Sciatic nerve (tissue), 2 donors: ENCODE measurements at regions of chr10 and their contacts with region 1.

Region 1: GRCh38 chr10:114304017-114304570 is 65.0 kb downstream of the VWA2 start:
- DNase-seq: peak; percentile 92
- ATAC-seq: peak; percentile 85

Region 2: GRCh38 chr10:113922787-113923570 is 381.1 kb before region 1 on chr10:
- intact Hi-C with region 1: no loop called
- DNase-seq: no peak
- ATAC-seq: no peak

Region 3: GRCh38 chr10:114212153-114212552 is 91.9 kb before region 1 on chr10:
- intact Hi-C with region 1: no loop called
- DNase-seq: no peak
- ATAC-seq: no peak

Region 4: GRCh38 chr10:114403541-114404161 is 99.6 kb after region 1 on chr10:
- intact Hi-C with region 1: loop called (anchors 10 kb)
- DNase-seq: peak; percentile 78
- ATAC-seq: peak; percentile 78

Region 5: DNA sequence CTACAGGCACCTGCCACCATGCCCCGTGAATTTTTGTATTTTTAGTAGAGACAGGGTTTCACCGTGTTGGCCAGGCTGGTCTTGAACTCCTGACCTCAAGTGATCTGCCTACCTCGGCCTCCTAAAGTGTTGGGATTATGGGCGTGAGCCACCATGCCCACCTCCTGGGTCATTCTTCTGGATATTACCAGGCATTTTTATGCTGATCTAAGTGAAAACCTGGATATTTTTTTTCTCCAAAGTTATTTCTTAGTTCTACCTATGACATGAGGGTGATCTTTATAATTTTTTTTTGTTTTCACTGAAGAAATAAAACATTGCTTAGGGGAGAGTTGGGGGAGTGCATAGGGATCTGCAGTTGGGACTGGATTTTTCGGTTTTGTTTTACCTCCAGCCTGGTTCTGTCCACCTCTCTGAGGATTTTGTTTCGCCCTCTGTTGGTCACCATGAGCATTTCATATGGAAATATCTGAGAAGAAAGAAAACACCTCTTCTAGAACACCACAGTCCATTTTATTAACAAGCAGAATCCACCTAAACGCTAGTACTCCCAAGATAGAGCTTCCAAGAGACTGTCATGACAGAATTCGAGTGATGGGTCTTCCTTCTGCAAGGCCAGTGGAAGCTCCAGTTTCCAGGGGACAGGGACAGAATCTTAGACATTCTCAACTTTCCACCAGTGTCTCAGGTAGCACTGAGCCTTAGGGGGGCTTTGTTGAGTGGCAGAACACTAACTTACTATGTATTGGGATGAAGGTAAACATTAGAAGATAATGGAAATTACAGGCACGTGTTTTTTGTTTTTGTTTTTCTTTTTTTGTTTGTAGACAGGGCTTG is 133.6 kb after region 1 on chr10:
- intact Hi-C with region 1: loop called (anchors 10 kb)
- DNase-seq: no peak
- ATAC-seq: no peak